Activated CD4-positive, alpha-beta T cell treated with anti-CD3 and anti-CD28 coated beads, Interleukin-2, amount 10 ng/mL, durations not matched to agents 24 days and 14 days (primary cell): ENCODE measurements at regions of chr11 and their contacts with region 1.

Region 1: DNA sequence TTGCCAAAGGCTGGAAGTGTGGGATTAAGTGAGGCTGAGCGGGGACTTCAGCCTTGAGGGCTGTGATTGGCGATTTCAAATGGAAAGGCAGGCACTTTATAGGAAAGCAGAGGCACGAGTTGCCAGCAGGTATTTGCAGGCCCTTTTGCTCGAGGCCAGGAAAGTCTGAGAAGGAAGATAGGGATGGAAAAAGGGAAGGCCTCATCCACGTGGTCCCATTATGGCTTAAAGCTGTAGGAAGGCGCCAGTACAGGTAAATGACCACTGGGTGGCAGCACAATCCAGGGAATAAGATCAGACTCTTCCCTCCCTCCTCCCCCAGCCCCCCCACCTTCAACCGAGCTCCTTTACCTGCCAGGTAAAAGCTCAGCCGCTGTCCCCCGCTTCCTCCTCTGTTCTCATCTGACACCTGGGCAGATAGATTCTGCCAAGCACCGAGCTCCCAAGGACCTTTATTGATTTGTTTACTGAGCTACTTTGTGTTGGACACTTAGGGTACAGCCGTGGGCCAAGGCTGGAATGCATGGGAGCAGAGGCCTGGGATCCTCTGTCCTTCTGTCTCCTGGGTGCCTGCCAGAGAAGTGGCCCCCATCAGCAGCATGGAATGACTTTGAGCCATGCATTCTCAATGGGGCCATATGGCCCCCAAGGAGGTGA is 7.5 kb downstream of the P2RX3 start:
- DNase-seq: peak; percentile 89
- H3K4me3 Mint-ChIP-seq: no peak overlapping the region
- H3K27ac Mint-ChIP-seq: no peak overlapping the region
- H3K4me1 Mint-ChIP-seq: peaks cover 7% of the 10 kb centered on the region
- H3K27me3 Mint-ChIP-seq: peaks cover 16% of the 10 kb centered on the region

Region 2: GRCh38 chr11:57480409-57481137 is 134.9 kb after region 1 on chr11:
- intact Hi-C with region 1: loop called (anchors 1 kb)
- DNase-seq: peak; percentile 92
- H3K4me3 Mint-ChIP-seq: no peak overlapping the region
- H3K27ac Mint-ChIP-seq: no peak overlapping the region
- H3K4me1 Mint-ChIP-seq: peaks cover 8% of the 10 kb centered on the region
- H3K27me3 Mint-ChIP-seq: peaks cover 52% of the 10 kb centered on the region

Region 3: GRCh38 chr11:57644748-57645688 is 299.3 kb after region 1 on chr11:
- intact Hi-C with region 1: loop called (anchors 1 kb)
- DNase-seq: peak; percentile 96
- H3K4me3 Mint-ChIP-seq: no peak overlapping the region
- H3K27ac Mint-ChIP-seq: no peak overlapping the region
- H3K4me1 Mint-ChIP-seq: peaks cover 48% of the 10 kb centered on the region
- H3K27me3 Mint-ChIP-seq: peaks cover 40% of the 10 kb centered on the region